ENCODE measurements at regions of chr6 and their contacts with region 1.

Region 1: GRCh38 chr6:113994918-113995342 is 24.0 kb upstream of the HDAC2 start:
- H3K4me3 ChIP-seq: no peak overlapping the region
- H3K27ac ChIP-seq: no peak overlapping the region
- H3K4me1 ChIP-seq: peaks cover 7% of the 10 kb centered on the region; the same call in 1 of the 2 replicates
- CTCF ChIP-seq: peak; percentile 94

Region 2: GRCh38 chr6:113970805-113971676 is 23.9 kb before region 1 on chr6 and contains the start of gene HDAC2:
- CTCF ChIA-PET with region 1: interaction called, 15 read pairs
- POLR2A ChIA-PET with region 1: interaction called, 4 read pairs
- H3K4me3 ChIP-seq: peak within 1 kb of the TSS; percentile 96
- H3K27ac ChIP-seq: peak within 1 kb of the TSS; percentile 90
- H3K4me1 ChIP-seq: peaks cover 9% of the 10 kb centered on the region
- CTCF ChIP-seq: peak; percentile 82

Region 3: DNA sequence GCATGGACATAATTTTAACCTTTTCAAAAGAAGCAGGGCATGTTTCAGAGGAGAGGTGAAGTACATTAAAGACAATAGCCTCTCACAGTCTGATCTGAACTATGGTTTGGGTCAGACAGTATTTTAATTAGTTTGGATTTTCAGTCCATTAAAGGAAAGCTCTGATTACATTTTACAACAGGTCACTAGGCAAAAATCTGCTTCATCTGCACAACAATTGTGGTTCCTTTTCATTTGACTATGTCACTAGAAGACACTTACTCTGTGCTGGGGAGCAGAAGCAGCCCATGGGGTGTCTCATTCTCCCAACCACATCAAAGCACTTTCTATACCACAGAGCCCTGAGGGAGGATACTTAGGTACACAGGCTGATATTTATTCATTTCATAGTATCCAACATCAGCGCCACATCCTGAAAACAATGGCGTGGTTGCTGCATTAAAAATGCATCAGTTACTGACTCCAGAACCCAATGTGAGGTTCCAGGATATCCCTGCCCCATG is 12.6 kb after region 1 on chr6:
- CTCF ChIA-PET with region 1: interaction called, 21 read pairs
- POLR2A ChIA-PET with region 1: no interaction called
- H3K4me3 ChIP-seq: no peak overlapping the region
- H3K27ac ChIP-seq: no peak overlapping the region
- H3K4me1 ChIP-seq: no peaks in the 10 kb centered on the region
- CTCF ChIP-seq: no peak

Region 4: DNA sequence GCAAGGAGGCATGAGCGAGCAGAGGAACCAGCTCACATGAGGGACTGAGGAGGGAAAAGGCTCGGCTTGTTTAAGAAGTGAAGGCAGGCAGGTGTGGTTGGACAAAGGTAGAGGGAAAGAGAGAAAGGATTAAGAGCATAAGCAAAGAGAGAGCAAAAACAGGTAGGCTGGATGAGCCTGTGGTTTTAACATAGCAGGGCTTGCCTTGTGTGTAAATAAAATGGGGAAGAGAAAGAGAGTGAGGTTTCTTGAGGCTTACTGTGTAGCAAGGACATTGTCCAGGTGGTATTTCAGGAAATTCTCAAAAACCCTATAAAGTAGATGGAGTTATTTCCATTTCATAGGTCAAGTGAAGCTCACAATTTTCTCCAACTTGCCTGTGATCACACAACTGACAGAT is 69.9 kb after region 1 on chr6:
- CTCF ChIA-PET with region 1: interaction called, 31 read pairs
- POLR2A ChIA-PET with region 1: no interaction called
- H3K4me3 ChIP-seq: no peak overlapping the region
- H3K27ac ChIP-seq: no peak overlapping the region
- H3K4me1 ChIP-seq: no peaks in the 10 kb centered on the region
- CTCF ChIP-seq: no peak

Region 5: DNA sequence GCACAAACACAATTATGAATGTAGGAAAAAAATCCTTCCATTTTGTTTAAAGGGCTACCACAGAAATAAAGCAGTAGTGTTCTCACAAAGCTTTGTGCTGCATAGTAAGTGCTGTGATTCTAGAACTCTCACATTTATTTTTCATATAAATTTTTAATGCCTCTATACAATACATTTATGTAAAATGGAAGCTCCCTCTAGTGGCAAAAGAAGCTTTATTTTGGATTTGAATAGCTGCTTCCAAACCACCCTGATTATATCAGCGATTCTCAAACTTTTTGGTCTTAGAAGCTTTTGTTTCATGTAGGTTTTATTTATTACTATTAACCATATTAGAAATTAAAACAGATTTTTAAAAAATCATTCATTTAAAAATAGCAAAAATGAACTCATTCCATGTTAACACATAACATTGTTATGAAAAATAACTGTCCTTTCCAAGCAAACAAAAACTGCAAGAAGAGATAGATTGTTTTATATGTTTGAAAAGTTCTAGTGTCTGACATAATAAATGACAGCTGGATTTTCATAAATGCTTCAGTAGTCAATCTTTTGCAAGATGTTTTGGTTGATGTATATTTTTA is 309.5 kb after region 1 on chr6:
- CTCF ChIA-PET with region 1: interaction called, 41 read pairs
- POLR2A ChIA-PET with region 1: no interaction called
- H3K4me3 ChIP-seq: no peak overlapping the region
- H3K27ac ChIP-seq: no peak overlapping the region
- H3K4me1 ChIP-seq: no peaks in the 10 kb centered on the region
- CTCF ChIP-seq: no peak

Measured in HEK293 (cell line).